Activated B cell treated with CpG ODN at 0.5 μM for 24 hours (primary cell): ENCODE measurements at regions of chr2 and their contacts with region 1.

Region 1: DNA sequence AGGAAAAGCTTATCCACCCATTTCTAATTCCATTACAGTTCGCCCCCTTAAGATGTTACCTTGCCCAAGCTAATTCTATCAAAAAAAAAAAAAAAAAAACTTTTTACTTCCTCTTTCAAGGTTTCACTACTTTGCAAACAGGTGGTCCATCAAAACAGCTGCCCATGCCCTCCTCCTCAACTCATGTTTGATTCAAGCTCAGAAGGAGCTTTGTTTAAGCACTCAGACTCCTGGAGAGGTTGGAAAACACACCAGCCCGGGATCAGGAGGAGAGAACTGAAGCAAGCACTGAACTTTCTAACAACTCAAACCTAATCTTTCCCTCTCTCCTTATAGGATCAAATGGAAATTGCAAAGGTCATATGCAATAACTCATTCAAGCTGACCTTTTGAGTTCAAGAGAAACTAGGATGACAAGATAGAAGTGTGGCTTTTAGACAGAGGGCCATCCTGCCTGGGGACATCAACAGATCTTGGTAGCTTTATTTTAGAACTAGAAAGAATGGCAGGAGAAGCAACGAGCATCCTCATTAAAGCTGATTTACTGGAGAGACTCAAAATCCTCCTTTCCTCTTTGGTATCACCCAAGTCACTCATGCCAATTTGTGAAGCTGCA is 28.3 kb upstream of the FZD7 start:
- DNase-seq: no peak
- ATAC-seq: peak; percentile 60
- H3K4me3 Mint-ChIP-seq: no peak overlapping the region
- H3K27ac Mint-ChIP-seq: no peak overlapping the region
- H3K4me1 Mint-ChIP-seq: peaks cover 14% of the 10 kb centered on the region
- H3K27me3 Mint-ChIP-seq: peaks cover 8% of the 10 kb centered on the region
- CTCF ChIP-seq: no peak

Region 2: GRCh38 chr2:201866643-201867473 is 138.5 kb before region 1 on chr2:
- CTCF ChIA-PET with region 1: no interaction called
- POLR2A ChIA-PET with region 1: no interaction called
- intact Hi-C with region 1: no loop called
- DNase-seq: no peak
- ATAC-seq: no peak
- H3K4me3 Mint-ChIP-seq: no peak overlapping the region
- H3K27ac Mint-ChIP-seq: no peak overlapping the region
- H3K4me1 Mint-ChIP-seq: no peaks in the 10 kb centered on the region
- H3K27me3 Mint-ChIP-seq: peaks cover 14% of the 10 kb centered on the region
- CTCF ChIP-seq: no peak

Region 3: DNA sequence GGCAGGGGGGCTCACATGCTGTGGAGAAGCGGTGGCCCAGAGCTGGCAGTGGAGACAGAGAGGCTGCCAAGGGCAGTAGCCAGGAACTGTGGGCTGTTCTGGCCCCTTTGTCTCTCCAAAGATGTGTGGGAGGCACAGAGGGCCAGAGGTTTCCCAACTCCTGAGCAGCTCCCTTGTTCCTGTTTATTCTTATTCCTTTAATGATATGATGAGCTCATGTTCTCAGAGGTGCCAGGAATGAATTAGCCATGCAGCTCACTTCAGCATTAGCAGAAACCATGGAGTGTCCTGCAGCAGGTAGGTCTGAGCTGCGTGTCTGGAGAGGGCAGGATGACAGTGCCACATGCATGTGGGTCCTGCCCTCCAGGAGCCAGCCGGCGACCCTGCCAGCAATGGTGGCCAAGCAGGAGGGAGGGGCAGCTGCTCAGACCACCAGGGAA is 49.7 kb before region 1 on chr2:
- CTCF ChIA-PET with region 1: no interaction called
- POLR2A ChIA-PET with region 1: no interaction called
- intact Hi-C with region 1: no loop called
- DNase-seq: no peak
- ATAC-seq: no peak
- H3K4me3 Mint-ChIP-seq: no peak overlapping the region
- H3K27ac Mint-ChIP-seq: no peak overlapping the region
- H3K4me1 Mint-ChIP-seq: peaks cover 2% of the 10 kb centered on the region
- H3K27me3 Mint-ChIP-seq: peaks cover 11% of the 10 kb centered on the region
- CTCF ChIP-seq: no peak

Region 4: GRCh38 chr2:202033321-202034248 is 28.2 kb after region 1 on chr2 and contains the start of gene FZD7:
- CTCF ChIA-PET with region 1: no interaction called
- POLR2A ChIA-PET with region 1: no interaction called
- intact Hi-C with region 1: loop called (anchors 2 kb)
- DNase-seq: peak; percentile 79
- ATAC-seq: peak; percentile 87
- H3K4me3 Mint-ChIP-seq: peak within 1 kb of the TSS; percentile 86
- H3K27ac Mint-ChIP-seq: peak within 1 kb of the TSS; percentile 14
- H3K4me1 Mint-ChIP-seq: peaks cover 12% of the 10 kb centered on the region
- H3K27me3 Mint-ChIP-seq: peaks cover 17% of the 10 kb centered on the region
- CTCF ChIP-seq: no peak
- total RNA-seq, gene FZD7: 0.33 and 0.37 TPM in 2 replicates